Posterior cingulate gyrus (tissue), 11 donors: ENCODE measurements at regions of chr2 and their contacts with region 1.

Region 1: DNA sequence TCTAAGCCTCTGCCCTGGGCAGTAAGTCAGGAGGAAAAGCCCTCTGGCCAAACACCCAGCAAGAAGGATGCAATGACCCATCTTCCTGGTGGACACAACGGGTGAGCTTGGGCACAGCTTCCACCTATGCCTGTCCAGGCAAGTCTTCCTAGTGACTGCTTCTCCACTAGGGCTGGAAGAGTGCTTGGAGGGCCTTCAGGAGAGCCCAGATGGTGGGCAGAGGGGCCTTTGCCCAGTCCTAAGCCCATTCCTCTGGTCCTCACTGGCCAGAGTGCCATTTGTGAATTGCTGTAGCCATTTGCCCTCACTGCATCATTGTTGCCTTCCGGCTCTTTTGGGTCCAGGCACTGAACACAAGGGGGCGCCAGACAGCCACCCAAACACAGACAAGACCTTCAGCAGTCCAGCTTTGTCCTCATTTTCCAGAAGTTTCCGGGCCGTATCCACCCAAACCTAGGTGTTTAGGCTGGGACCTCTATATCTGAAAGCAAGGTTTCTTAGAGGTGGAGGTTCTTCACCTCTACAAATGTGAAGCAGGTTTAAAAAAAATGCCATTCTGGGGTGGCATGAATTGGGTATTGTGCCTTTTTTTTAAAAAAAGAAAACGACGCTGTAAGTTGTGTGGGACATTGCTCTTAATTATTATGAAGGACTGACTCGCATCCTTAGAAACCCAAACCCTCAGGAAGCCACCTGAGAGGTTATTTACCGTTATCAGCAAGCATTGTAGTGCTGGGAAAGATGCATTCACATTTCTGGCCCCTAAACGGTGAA is 29.5 kb downstream of the PAX8 start:
- DNase-seq: peak in 9 of 10 donors; percentile 58 to 96 (median 75)

Region 2: GRCh38 chr2:113203901-113204519 is 45.2 kb before region 1 on chr2:
- intact Hi-C with region 1: loop called (anchors 5 kb)
- DNase-seq: peak; percentile 50 to 96 (median 74)